ENCODE measurements at regions of chr17 and their contacts with region 1.

Region 1: GRCh38 chr17:44308320-44308818 is at the start of gene RUNDC3A:
- DNase-seq: peak; percentile 96
- total RNA-seq, gene RUNDC3A: 0.83 TPM in 1 of 2 donors, not detected in the other

Region 2: GRCh38 chr17:44247876-44248736 is 60.3 kb before region 1 on chr17:
- intact Hi-C with region 1: no loop called
- DNase-seq: no peak

Region 3: DNA sequence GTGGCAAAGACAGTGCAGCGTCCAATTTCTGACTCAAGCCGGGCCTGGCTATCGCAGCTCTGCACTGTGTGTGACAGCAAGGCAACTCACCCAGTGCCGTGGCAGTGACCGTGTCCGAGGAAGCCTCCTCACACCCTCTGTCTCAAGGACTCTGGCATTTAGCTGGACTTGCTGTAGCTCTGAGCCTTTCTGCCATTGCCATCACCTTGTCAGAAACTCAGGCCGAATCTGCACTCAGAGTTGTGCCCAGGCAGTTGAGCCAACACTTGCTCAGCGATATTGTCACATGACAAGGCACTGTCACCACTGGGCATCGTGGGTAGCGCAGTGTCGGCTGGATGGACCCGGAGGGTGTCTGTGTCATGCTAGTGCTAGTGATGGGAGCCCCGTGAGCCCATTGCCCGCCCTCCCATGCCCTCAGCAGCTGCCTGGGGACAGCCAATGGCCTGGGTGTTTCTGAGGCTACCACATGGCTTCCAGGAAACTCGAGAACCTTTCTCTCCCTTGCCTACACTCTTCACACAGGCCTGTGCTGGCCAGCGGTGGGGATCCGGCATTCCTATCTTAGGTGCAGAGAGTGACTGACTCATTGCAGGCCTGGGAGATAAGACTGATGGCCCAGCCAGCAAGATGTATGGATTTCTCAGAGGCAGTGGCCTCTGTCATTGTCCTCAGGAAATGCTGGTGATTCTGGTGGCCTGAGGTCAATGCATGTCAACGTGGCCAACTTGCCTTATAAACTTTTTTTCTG is 1668.6 kb after region 1 on chr17:
- intact Hi-C with region 1: loop called in 1 of 2 experiments (anchors 10 kb)
- DNase-seq: peak; percentile 70

Measured in posterior vena cava (tissue), 2 donors.